Activated CD4-positive, alpha-beta memory T cell treated with anti-CD3 and anti-CD28 coated beads, Interleukin-2, amount 10 ng/mL, durations not matched to agents 7 days and 5 days (primary cell): ENCODE measurements at regions of chr7 and their contacts with region 1.

Region 1: GRCh38 chr7:123494193-123494796 is 40.1 kb downstream of the IQUB start:
- DNase-seq: no peak
- H3K4me3 Mint-ChIP-seq: no peak overlapping the region
- H3K27ac Mint-ChIP-seq: no peak overlapping the region
- H3K4me1 Mint-ChIP-seq: no peaks in the 10 kb centered on the region
- H3K27me3 Mint-ChIP-seq: peaks cover 9% of the 10 kb centered on the region

Region 2: GRCh38 chr7:123534383-123535260 is 40.3 kb after region 1 on chr7 and contains the start of gene IQUB:
- CTCF ChIA-PET with region 1: interaction called, 24 read pairs
- POLR2A ChIA-PET with region 1: interaction called, 3 read pairs
- DNase-seq: peak; percentile 96
- H3K4me3 Mint-ChIP-seq: peak within 1 kb of the TSS; percentile 89
- H3K27ac Mint-ChIP-seq: peak within 1 kb of the TSS; percentile 77
- H3K4me1 Mint-ChIP-seq: peaks cover 27% of the 10 kb centered on the region
- H3K27me3 Mint-ChIP-seq: peaks cover 22% of the 10 kb centered on the region
- total RNA-seq, gene IQUB: not detected